ENCODE measurements at regions of chr19 and their contacts with region 1.

Region 1: GRCh38 chr19:35775298-35776110 is at the start of gene ARHGAP33:
- DNase-seq: peak; percentile 97
- ATAC-seq: peak; percentile 99
- H3K4me3 Mint-ChIP-seq: peak within 1 kb of the TSS; percentile 79
- H3K27ac Mint-ChIP-seq: no peak within 1 kb of the TSS
- H3K4me1 Mint-ChIP-seq: peaks cover 9% of the 10 kb centered on the region
- H3K27me3 Mint-ChIP-seq: no peaks in the 10 kb centered on the region
- CTCF ChIP-seq: no peak
- total RNA-seq, gene ARHGAP33: 9.3 and 15.0 TPM in 2 replicates

Region 2: DNA sequence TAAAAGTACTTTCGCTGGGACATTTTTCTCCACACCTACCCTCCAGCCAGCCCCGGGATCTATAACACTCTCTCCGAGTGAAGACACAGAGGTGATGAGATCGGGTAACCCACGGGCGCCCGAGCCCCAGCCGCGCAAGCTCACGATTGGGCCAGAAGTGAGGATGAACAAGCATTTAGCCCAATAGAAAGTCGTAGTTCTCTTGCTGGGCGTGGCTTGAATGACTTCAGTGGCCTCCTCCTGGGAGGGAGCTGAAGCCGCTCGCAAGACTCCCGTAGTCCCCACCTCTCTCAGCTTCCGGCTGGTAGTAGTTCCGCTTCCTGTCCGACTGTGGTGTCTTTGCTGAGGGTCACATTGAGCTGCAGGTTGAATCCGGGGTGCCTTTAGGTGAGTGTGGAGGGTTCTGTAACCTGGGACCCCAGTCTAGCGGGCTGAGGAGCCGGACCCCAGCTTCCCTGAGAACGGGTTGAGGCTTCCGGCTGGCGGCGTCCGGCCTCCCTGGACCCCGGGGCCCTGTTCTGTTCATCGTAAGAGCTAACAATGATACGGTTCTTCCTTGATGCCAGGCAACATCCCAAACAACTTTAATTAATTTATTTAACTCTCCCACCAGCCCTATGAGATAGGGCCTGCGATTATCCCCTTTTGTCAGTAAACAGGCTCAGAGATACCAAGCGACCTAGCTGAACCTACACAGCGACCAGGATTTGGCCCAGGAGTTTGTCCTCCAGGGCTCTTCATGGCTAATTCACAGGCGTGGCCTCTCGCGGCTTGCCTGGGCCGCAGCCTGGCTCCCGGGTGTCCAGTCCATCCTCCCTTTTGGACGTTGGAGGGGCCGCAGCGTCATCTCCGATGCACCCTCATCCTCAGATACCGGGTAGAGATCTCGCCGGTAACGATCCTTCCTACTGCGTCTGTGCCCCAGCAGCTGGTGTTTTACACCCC is 127.2 kb before region 1 on chr19 and contains the start of gene COX6B1:
- CTCF ChIA-PET with region 1: no interaction called
- POLR2A ChIA-PET with region 1: no interaction called
- intact Hi-C with region 1: loop called (anchors 1 kb)
- DNase-seq: peak; percentile 72
- ATAC-seq: peak; percentile 66
- H3K4me3 Mint-ChIP-seq: peak within 1 kb of the TSS; percentile 96
- H3K27ac Mint-ChIP-seq: peak within 1 kb of the TSS; percentile 87
- H3K4me1 Mint-ChIP-seq: peaks cover 37% of the 10 kb centered on the region
- H3K27me3 Mint-ChIP-seq: no peaks in the 10 kb centered on the region
- CTCF ChIP-seq: no peak
- total RNA-seq, gene COX6B1: 334 and 401 TPM in 2 replicates

Region 3: DNA sequence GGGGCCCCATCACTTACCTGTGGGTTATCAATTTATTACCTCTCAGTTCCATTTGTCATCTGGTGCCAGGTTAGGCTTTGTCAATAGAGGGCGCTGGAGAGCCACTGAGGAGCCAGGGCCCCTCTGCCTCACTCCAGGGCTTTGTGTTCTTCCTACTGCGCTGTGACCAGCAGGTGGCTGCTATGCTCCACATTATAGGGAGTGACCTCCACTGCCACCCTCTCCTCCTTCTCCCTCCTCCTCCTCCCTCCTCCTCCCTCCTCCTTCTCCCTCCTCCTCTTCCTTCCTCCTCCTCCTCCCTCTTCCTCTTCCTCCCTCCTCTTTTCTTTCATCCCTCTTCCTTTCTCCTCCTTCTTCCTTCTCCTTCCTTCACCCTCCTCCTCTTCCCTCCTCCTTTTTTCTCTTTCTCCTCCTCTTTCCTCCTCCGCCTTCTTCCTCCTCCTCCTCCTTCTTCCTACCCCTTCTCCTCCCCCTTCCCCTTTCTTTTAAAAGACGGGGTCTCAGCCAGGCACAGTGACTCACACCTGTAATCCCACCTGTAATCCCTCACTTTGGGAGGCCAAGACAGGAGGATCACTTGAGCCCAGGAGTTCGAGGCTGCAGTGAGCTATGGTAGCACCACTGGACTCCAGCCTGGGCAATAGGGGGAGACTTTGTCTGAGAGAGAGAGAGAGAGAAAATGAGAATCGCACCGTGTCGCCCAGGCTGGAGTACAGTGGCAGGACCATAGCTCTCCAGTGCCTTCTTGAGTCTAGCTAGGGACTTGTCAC is 81.5 kb before region 1 on chr19:
- CTCF ChIA-PET with region 1: no interaction called
- POLR2A ChIA-PET with region 1: no interaction called
- intact Hi-C with region 1: loop called (anchors 5 kb)
- DNase-seq: peak; percentile 76
- ATAC-seq: peak; percentile 100
- H3K4me3 Mint-ChIP-seq: no peak overlapping the region
- H3K27ac Mint-ChIP-seq: no peak overlapping the region
- H3K4me1 Mint-ChIP-seq: peaks cover 3% of the 10 kb centered on the region
- H3K27me3 Mint-ChIP-seq: peaks cover 4% of the 10 kb centered on the region
- CTCF ChIP-seq: no peak

Region 4: GRCh38 chr19:35757749-35758608 is 17.5 kb before region 1 on chr19 and contains the start of gene PROSER3:
- CTCF ChIA-PET with region 1: no interaction called
- POLR2A ChIA-PET with region 1: no interaction called
- intact Hi-C with region 1: loop called (anchors 1 kb)
- DNase-seq: peak; percentile 94
- ATAC-seq: peak; percentile 95
- H3K4me3 Mint-ChIP-seq: peak within 1 kb of the TSS; percentile 97
- H3K27ac Mint-ChIP-seq: peak within 1 kb of the TSS; percentile 96
- H3K4me1 Mint-ChIP-seq: peaks cover 33% of the 10 kb centered on the region
- H3K27me3 Mint-ChIP-seq: peaks cover 15% of the 10 kb centered on the region
- CTCF ChIP-seq: no peak
- total RNA-seq, gene PROSER3: 43.7 and 60.5 TPM in 2 replicates

Region 5: GRCh38 chr19:35845215-35846037 is 69.9 kb after region 1 on chr19:
- CTCF ChIA-PET with region 1: no interaction called
- POLR2A ChIA-PET with region 1: no interaction called
- intact Hi-C with region 1: no loop called
- DNase-seq: no peak
- ATAC-seq: peak; percentile 28
- H3K4me3 Mint-ChIP-seq: peak overlapping the region; percentile 64
- H3K27ac Mint-ChIP-seq: no peak overlapping the region
- H3K4me1 Mint-ChIP-seq: peaks cover 16% of the 10 kb centered on the region
- H3K27me3 Mint-ChIP-seq: peaks cover 52% of the 10 kb centered on the region
- CTCF ChIP-seq: no peak

Region 6: DNA sequence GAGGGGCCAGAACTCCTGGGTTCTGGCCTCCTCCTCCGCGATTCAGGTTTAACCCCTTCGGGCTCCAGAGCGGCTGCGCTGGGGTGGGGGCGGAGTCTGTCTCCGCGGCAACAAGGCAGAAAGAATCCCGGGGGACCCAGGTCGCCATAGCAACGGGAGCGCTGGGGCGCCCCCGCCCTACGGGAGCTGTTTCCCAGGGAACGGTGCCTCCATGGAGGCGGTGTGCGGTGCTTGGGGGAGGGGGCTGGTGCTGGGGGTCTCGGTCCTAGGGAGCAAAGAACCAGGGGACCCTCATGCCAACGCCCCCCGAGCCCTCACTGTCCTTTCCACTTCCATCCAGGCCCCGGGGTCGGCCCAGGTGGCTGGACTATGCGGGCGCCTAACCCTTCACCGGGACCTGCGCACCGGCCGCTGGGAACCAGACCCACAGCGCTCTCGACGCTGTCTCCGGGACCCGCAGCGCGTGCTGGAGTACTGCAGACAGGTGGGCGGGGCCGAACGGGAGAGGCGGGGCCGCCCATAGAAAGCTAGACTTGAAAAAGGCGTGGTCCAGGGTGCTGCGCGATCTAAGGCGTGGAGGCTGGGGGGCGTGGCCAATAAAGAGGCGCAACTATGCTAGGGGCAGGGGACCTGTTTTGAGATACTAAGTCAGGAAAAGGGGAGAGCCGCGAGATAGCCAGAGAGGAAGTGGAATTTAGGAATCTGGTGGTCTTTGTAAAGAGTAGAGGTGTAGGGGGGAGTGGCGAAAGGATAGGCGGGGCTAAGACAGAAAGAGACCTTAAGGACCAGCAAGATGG is 94.0 kb after region 1 on chr19:
- CTCF ChIA-PET with region 1: no interaction called
- POLR2A ChIA-PET with region 1: no interaction called
- intact Hi-C with region 1: loop called (anchors 5 kb)
- DNase-seq: peak; percentile 55
- ATAC-seq: peak; percentile 83
- H3K4me3 Mint-ChIP-seq: peak overlapping the region; percentile 67
- H3K27ac Mint-ChIP-seq: no peak overlapping the region
- H3K4me1 Mint-ChIP-seq: peaks cover 17% of the 10 kb centered on the region
- H3K27me3 Mint-ChIP-seq: peaks cover 61% of the 10 kb centered on the region
- CTCF ChIP-seq: no peak